Right ventricle myocardium superior (tissue), 1 donor: ENCODE measurements at regions of chr16 and their contacts with region 1.

Region 1: DNA sequence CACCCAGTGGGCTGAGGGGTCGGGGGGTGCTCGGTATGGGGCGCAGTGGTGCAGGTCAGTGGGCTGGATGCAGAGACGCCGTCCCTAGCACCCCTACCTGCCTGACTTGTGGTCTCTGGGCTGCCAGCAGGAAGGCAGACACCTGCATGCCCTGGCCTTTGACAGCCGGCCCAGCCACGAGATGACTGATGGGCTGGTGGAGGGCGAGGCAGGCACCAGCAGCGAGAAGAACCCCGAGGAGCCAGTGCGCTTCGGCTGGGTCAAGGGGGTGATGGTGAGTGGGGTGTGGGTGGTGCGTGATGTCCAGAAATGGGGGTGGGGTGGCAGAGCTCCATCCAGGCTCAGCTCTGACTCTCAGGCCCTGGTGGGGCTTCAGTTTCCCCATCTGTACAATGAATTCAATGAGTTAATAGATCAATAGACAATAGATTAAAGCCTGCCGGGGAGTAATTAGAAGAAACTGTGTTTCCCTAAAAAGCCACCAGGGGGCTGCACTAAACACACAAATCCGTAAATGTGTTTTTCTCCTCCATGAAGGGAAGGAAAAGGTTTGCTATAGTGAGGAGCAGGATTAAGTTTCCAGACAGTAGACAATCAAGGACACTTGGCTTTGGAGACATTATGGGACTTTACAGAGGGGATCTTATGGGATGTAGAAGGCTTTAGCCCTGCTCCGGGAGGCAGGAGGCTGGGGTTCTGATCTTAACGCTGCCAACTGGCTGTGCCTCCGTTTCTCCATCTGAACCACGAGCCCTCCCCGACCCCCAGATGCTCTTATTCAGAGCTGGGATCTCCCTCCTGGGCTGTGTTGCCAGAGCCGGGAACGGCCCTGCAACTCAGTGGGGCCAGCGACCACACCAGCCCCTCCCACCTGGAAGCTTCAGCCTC is 2.2 kb downstream of the SLC12A3 start:
- DNase-seq: no peak
- ATAC-seq: peak; percentile 58

Region 2: GRCh38 chr16:56691885-56692284 is 175.3 kb before region 1 on chr16:
- intact Hi-C with region 1: no loop called
- DNase-seq: no peak
- ATAC-seq: peak; percentile 91

Region 3: GRCh38 chr16:56931892-56932720 is 64.9 kb after region 1 on chr16 and contains the start of gene HERPUD1:
- intact Hi-C with region 1: loop called (anchors 5 kb)
- DNase-seq: peak; percentile 99
- ATAC-seq: peak; percentile 96
- total RNA-seq, gene HERPUD1: 105 TPM

Region 4: DNA sequence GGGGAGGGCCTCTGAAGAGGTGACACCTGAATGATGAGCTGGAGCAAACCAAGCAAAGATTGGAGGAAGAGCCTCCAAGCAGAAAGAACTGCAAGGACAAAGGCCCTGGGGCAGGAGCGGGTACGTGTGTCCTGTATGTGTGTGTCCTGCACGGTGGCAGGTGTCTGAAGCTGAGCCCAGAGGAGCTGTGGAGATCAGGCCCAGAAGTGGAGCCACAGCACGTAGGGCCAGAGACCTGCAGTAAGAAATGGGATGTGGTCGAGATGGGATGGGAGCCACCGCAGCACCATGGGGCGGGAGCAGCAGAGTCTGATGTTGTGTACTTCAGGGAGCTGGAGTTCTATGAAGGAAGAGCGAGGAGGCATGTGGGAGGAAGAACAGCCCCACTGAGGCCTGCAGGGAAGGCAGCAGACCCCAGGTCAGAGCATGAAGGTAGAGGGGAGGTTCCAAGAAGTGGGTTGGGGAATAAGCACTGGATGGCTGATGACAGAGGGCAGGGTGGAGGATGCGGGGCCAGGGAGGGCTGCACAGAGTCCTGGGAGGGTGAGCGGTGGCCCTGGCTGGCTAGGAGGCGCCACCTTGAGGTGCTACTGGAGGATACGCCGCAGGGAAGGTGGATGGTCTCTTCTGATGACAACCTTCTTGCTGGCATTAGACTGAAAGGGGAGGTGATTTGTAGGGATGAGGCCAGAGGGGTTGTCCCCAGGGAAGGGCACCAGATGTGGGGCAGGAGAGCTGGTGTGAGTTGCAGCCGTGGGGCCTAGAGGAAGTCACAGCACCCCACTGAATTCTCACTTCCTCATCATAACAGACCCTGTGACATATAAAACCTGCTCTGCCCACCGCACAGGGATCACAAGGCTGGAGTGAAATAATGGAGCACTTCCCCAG is 83.9 kb after region 1 on chr16:
- intact Hi-C with region 1: loop called (anchors 5 kb)
- DNase-seq: no peak
- ATAC-seq: peak; percentile 70

Region 5: GRCh38 chr16:57045694-57046381 is 178.7 kb after region 1 on chr16:
- intact Hi-C with region 1: loop called (anchors 5 kb)
- DNase-seq: peak; percentile 86
- ATAC-seq: peak; percentile 90